Activated CD4-positive, alpha-beta T cell treated with anti-CD3 and anti-CD28 coated beads, Interleukin-2, amount 10 ng/mL, durations not matched to agents 7 days and 5 days (primary cell): ENCODE measurements at regions of chr9 and their contacts with region 1.

Region 1: DNA sequence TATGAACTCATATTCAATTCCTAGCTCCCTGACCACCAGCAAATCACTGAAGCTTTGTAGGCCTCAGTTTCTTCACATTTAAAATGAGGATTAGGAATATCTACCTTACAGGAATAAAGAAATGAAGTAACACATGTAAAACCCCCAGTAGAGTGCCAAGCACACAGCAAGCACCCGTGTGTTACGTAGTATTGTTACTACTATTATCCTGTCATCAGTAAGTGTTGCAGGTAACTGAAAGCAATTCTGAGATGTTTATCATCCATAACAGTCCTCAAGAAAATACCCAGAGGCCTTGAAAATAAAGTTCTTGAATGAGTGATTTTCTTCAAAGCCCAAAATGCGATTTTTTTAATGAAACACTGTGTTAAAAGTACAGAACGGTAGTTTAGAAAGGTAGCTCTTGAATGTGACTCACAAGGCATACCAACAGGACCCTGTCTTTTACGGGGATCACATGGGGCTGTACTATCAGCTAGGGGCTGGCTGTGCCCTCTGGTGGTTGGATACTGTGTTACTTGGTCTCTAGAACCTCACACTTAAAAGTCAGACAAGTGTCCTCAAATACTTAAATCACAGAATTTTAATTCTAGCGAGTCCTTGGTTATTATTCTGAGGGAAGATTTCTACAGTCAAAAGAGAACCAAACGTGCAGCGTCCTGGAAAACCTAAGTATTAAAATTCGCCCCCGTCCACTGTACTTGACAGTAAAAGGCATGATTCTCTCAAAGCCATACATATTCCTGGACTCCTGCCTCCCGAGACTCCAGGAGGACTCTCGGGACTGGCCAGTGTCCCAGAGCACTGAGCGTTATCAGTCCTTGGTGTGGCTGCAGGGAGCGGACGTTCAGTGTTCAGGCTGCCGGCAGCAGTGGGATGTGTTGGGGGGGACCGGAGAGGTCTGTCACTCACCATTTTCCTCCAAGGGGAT is 725 bp downstream of the NDUFB6 start:
- DNase-seq: peak; percentile 85
- H3K4me3 Mint-ChIP-seq: peak overlapping the region; percentile 98
- H3K27ac Mint-ChIP-seq: peak overlapping the region; percentile 99
- H3K4me1 Mint-ChIP-seq: peaks cover 31% of the 10 kb centered on the region
- H3K27me3 Mint-ChIP-seq: no peaks in the 10 kb centered on the region

Region 2: DNA sequence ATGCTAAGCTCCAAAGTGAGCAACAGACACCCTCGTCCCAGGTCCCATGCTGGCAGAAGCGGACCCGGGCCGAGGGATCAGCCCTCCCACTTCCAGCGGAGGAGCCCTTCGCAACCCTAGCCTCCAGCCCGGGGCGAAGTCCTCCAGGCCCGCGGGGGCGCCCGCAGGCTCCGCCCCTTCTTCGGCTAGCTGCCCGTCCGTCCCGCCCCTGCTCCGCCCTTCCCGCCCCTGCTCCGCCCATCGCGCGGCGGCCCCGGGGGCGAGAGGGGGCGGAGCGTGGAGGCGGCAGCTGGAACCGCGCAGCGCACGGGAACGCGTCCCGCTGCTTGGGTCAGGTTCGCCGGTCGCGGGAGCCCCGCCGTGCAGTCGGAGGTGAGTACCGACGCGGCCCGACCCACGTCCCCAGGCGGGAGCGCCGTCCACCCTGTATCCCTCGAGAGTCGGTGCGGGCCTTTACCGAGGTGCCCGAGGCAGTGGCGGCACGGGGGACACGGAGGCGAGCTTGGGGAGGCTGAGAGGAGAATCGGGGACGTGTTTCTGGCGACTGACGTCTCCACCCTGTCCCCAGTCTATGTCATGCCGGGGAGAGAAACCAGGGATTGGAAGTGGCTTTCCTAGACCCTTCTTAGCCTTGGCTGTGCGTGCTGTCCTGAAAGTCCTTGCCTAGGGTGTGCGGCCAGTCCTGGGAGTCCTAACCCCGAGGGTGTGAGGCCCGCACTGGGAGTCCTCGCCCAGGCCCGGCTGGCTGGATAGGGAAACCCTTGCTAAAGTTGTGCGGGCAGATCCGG is 187.7 kb before region 1 on chr9 and contains the start of gene ACO1:
- CTCF ChIA-PET with region 1: interaction called, 58 read pairs
- POLR2A ChIA-PET with region 1: no interaction called
- DNase-seq: peak; percentile 84
- H3K4me3 Mint-ChIP-seq: peak within 1 kb of the TSS; percentile 77
- H3K27ac Mint-ChIP-seq: peak within 1 kb of the TSS; percentile 67
- H3K4me1 Mint-ChIP-seq: peaks cover 20% of the 10 kb centered on the region
- H3K27me3 Mint-ChIP-seq: peaks cover 31% of the 10 kb centered on the region
- total RNA-seq, gene ACO1: 8.1 to 8.6 TPM

Region 3: DNA sequence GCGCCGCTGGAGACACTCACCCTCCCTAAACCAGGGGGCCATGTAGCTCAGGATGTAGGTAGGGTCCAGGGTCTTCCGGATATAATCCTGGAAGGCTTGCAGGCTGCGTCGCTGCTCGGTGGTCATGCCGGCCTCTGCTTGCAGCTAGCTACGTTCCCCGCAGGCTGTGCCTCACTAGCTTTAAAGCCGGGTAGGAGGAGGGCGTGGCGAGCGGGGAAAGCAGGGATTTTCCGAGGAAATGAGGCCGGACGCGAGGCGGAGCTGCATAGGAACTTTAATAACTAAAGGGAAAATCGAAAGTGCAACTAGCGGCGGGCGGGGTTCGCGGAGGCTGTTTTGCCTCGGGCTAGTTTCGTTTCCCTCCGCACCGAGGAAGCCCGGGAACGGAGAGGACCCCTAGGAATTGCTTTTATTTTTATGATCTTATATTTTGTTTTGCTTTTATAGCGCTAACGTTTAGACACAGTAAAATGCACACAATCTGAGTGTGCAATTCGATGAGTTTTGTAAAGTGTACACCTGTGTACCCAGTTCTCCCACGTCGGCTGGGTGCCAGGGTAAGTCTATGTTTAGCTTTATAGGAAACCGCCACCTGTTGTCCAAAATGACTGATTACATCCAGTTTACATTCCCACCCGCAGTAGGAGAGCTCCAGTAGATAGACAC is 46.1 kb before region 1 on chr9 and contains the start of gene RIGI:
- CTCF ChIA-PET with region 1: interaction called, 13 read pairs
- POLR2A ChIA-PET with region 1: no interaction called
- DNase-seq: peak; percentile 86
- H3K4me3 Mint-ChIP-seq: peak within 1 kb of the TSS; percentile 93
- H3K27ac Mint-ChIP-seq: peak within 1 kb of the TSS; percentile 96
- H3K4me1 Mint-ChIP-seq: peaks cover 50% of the 10 kb centered on the region
- H3K27me3 Mint-ChIP-seq: no peaks in the 10 kb centered on the region
- total RNA-seq, gene RIGI: 26.9 to 28.5 TPM

Region 4: GRCh38 chr9:32550562-32551433 is 21.4 kb before region 1 on chr9:
- CTCF ChIA-PET with region 1: interaction called, 25 read pairs
- POLR2A ChIA-PET with region 1: no interaction called
- DNase-seq: peak; percentile 96
- H3K4me3 Mint-ChIP-seq: peak overlapping the region; percentile 94
- H3K27ac Mint-ChIP-seq: peak overlapping the region; percentile 100
- H3K4me1 Mint-ChIP-seq: peaks cover 33% of the 10 kb centered on the region
- H3K27me3 Mint-ChIP-seq: no peaks in the 10 kb centered on the region

Region 5: DNA sequence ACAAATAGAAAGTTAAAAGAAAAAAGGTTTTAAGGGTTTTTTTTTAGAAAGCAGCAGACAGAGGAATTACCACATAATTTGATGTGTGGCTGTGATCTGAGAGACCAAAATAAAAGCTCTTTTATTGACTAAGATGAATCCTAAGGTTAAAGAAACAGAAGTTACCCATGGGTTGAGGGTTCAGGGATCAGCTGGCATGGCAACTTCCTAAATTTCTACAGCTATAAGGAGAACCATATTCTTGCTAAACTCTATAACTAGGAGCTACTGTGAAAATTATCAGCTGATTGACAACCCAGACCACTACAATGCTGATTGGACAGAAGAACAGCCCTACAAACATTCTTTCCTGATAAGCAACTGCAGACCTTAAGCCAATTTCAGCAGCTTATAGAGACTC is 251.3 kb after region 1 on chr9:
- CTCF ChIA-PET with region 1: no interaction called
- POLR2A ChIA-PET with region 1: no interaction called
- DNase-seq: no peak
- H3K4me3 Mint-ChIP-seq: no peak overlapping the region
- H3K27ac Mint-ChIP-seq: no peak overlapping the region
- H3K4me1 Mint-ChIP-seq: no peaks in the 10 kb centered on the region
- H3K27me3 Mint-ChIP-seq: peaks cover 11% of the 10 kb centered on the region